ENCODE measurements at regions of chr12 and their contacts with region 1.

Region 1: DNA sequence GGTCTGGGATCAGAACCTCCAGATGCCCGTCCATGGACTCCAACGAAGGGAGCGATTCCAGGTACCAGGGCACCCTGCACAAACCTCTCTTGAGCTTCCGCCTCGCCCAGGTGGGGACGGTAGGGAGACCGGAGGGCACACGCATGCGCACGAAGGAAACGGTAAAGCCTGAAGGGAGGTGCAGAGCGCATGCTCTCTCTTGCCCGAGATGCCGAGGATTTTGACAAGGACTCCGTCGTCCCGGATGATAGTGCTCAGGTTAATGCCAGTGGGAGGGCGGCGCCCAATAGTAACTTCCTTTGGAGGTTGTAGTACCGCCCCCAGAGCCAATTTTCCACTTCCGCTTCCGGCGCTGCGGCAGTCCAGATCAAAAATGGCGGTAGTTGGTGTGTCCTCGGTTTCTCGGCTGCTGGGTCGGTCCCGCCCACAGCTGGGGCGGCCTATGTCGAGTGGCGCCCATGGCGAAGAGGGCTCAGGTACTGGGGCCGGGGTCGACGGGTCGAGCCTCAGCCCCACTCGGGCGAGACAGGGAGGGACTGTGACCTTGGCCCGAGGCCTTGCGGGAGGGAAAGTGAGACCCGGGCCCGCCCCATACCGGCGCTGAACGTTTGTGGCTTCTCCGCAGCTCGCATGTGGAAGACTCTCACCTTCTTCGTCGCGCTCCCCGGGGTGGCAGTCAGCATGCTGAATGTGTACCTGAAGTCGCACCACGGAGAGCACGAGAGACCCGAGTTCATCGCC is at the start of gene COX6A1:
- DNase-seq: peak; percentile 93 to 98 (median 96)
- ATAC-seq: peak; percentile 96 to 99 (median 98)
- H3K4me3 ChIP-seq: peak within 1 kb of the TSS; percentile 62 to 97 (median 83)
- H3K27ac ChIP-seq: peak within 1 kb of the TSS; percentile 76 to 92 (median 88)
- H3K4me1 ChIP-seq: peaks cover 0 to 23% (median 16%) of the 10 kb centered on the region in 12 donors
- H3K27me3 ChIP-seq: no peaks in the 10 kb centered on the region
- CTCF ChIP-seq: peak in 1 of 12 donors; percentile 2
- POLR2A ChIP-seq: peak in 1 of 2 donors; percentile 47
- total RNA-seq, gene COX6A1: 117 to 318 (median 172) TPM

Region 2: DNA sequence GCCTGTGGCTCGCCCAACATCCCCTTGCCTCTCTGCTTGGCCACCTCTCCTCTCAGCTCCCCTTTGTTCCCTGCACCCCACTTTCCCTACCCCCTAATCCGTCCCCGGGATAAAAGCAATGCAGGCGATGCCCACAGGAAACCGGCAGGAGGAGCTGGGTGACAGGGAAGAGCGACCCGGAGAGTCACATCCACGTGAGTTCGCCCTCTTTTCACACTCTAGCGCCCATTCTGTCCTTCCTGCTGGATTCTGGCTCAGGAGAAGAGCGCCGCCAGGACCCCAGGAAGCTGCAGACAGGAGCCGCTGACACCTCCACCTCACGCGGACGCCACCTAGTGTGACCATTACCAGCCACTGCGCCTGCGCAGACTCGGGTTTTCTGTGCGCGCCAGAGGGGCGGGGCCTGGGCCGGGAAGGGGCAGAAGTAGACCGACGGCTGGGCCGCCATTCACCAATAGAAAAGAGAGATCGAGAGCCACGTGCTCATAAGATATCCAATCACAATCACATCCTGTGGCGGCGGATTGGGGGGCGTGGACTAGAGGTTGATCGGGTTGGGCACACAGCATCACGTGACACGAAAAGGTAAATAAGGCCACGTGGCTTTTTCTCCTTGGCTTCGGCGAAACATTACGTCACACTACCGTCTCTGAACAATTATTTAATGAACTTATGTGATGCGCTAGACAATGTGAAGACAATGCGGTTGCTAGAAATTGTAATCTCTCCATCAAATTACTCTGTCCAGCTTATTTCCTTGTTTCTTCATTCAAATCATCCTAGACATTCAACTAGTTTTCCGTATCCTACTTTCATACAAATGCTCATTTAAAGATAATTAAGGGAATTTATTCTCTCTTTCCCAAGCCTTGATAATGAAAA is 120.5 kb before region 1 on chr12:
- intact Hi-C with region 1: loop called in 1 of 10 experiments (anchors 10 kb)
- DNase-seq: peak; percentile 99
- ATAC-seq: peak; percentile 100
- H3K4me3 ChIP-seq: peak overlapping the region; percentile 31 to 77 (median 64)
- H3K27ac ChIP-seq: peak overlapping the region in 11 of 12 donors; percentile 57 to 91 (median 84)
- H3K4me1 ChIP-seq: peaks cover 0 to 14% (median 8%) of the 10 kb centered on the region in 12 donors
- H3K27me3 ChIP-seq: no peaks in the 10 kb centered on the region
- CTCF ChIP-seq: peak; percentile 23 to 81 (median 52)
- POLR2A ChIP-seq: peak in 1 of 2 donors; percentile 87

Region 3: GRCh38 chr12:120327593-120327992 is 110.3 kb before region 1 on chr12 and contains the start of gene PLA2G1B:
- intact Hi-C with region 1: loop called in 2 of 10 experiments (anchors 5 to 10 kb)
- DNase-seq: no peak
- ATAC-seq: peak in 1 of 4 donors; percentile 33
- H3K4me3 ChIP-seq: no peak within 1 kb of the TSS
- H3K27ac ChIP-seq: no peak within 1 kb of the TSS
- H3K4me1 ChIP-seq: peaks cover 0 to 9% (median 0%) of the 10 kb centered on the region in 12 donors
- H3K27me3 ChIP-seq: no peaks in the 10 kb centered on the region
- CTCF ChIP-seq: no peak
- POLR2A ChIP-seq: no peak
- total RNA-seq, gene PLA2G1B: 0.93 to 2.0 (median 1.5) TPM in 4 of 9 donors, not detected in the others